Dendritic cell treated with granulocyte-macrophage colony-stimulating factor and Interleukin-4, amounts not matched to agents 40 ng/mL and 50 ng/mL, for 4 days (primary cell): ENCODE measurements at regions of chr19 and their contacts with region 1.

Region 1: GRCh38 chr19:36772311-36773222 is at the start of gene ZNF850:
- H3K4me3 Mint-ChIP-seq: peak within 1 kb of the TSS; percentile 86
- H3K27ac Mint-ChIP-seq: peak within 1 kb of the TSS; percentile 89
- H3K4me1 Mint-ChIP-seq: peaks cover 26% of the 10 kb centered on the region
- H3K27me3 Mint-ChIP-seq: no peaks in the 10 kb centered on the region

Region 2: GRCh38 chr19:36665832-36666231 is 106.7 kb before region 1 on chr19:
- intact Hi-C with region 1: loop called (anchors 2 kb)
- H3K4me3 Mint-ChIP-seq: peak overlapping the region; percentile 98
- H3K27ac Mint-ChIP-seq: peak overlapping the region; percentile 97
- H3K4me1 Mint-ChIP-seq: peaks cover 22% of the 10 kb centered on the region
- H3K27me3 Mint-ChIP-seq: no peaks in the 10 kb centered on the region

Region 3: DNA sequence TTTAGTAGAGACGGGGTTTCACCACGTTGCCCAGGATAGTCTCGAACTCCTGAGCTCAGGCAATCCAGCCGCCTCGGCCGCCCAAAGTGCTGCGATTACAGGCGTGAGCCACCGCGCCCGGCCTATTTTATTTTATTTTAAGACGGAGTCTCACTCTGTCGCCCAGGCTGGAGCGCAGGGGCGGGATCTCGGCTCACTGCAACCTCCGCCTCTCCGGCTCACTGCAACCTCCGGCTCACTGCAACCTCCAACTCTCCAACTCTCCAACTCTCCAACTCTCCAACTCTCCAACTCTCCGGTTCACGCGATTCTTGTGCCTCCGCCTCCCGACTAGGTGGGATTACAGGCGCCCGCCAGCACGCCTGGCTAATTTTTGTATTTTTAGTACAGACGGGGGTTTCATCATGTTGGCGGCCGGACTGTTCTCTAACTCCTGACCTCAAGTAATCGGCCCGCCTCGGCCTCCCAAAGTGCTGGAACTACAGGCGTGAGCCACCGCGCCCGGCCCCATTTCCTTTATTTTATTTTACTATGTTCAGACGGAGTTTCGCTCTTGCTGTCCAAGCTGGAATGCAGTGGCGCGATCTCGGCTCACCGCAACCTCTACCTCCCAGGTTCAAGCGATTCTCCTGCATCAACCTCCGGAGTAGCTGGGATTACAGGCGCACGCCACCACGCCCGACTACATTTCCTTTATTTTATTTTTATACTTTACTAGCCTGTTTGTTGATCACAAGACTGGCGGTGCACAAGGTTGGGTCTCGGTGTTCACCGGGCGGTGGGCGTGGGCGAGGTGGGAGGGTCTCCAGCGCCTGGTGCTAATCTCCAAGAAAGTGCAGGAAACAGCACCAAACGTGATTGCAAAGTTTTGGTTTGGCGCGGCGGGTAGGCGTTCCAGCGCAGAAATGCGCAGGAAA is 23.8 kb after region 1 on chr19:
- intact Hi-C with region 1: loop called (anchors 2 kb)
- H3K4me3 Mint-ChIP-seq: peak overlapping the region; percentile 88
- H3K27ac Mint-ChIP-seq: peak overlapping the region; percentile 95
- H3K4me1 Mint-ChIP-seq: no peaks in the 10 kb centered on the region
- H3K27me3 Mint-ChIP-seq: peaks cover 9% of the 10 kb centered on the region